ENCODE measurements at regions of chr18 and their contacts with region 1.

Region 1: DNA sequence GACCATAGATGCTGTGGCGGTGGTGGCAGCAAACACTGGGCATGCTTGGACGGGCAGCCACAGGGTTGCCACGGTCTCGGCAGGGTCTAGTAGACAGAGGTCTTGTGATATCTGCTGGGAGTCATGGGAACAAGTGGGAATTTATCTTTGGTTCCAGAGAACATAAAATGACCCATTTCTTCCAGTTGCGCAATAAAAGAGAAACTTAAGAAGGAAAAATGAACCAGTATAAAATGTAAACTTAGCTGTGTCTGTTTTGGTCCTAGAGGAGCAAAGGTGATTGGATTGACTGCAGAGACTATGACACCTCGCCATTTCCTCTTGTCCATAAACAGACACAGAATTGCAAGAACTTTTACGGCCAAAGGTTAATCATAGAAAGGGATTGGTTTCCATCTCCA is 132.6 kb upstream of the RBBP8 start:
- DNase-seq: no peak
- ATAC-seq: no peak
- H3K4me3 Mint-ChIP-seq: no peak overlapping the region
- H3K27ac Mint-ChIP-seq: no peak overlapping the region
- H3K4me1 Mint-ChIP-seq: no peaks in the 10 kb centered on the region
- H3K27me3 Mint-ChIP-seq: peaks cover 5% of the 10 kb centered on the region
- CTCF ChIP-seq: no peak

Region 2: GRCh38 chr18:22789600-22789999 is 11.0 kb before region 1 on chr18:
- CTCF ChIA-PET with region 1: interaction called, 12 read pairs
- POLR2A ChIA-PET with region 1: no interaction called
- intact Hi-C with region 1: no loop called
- DNase-seq: no peak
- ATAC-seq: no peak
- H3K4me3 Mint-ChIP-seq: no peak overlapping the region
- H3K27ac Mint-ChIP-seq: no peak overlapping the region
- H3K4me1 Mint-ChIP-seq: no peaks in the 10 kb centered on the region
- H3K27me3 Mint-ChIP-seq: peaks cover 13% of the 10 kb centered on the region
- CTCF ChIP-seq: no peak

Region 3: GRCh38 chr18:22813648-22814328 is 13.2 kb after region 1 on chr18:
- CTCF ChIA-PET with region 1: interaction called, 14 read pairs
- POLR2A ChIA-PET with region 1: no interaction called
- intact Hi-C with region 1: no loop called
- DNase-seq: peak; percentile 5
- ATAC-seq: no peak
- H3K4me3 Mint-ChIP-seq: no peak overlapping the region
- H3K27ac Mint-ChIP-seq: no peak overlapping the region
- H3K4me1 Mint-ChIP-seq: no peaks in the 10 kb centered on the region
- H3K27me3 Mint-ChIP-seq: peaks cover 11% of the 10 kb centered on the region
- CTCF ChIP-seq: peak; percentile 56